ENCODE measurements at regions of chr17 and their contacts with region 1.

Region 1: GRCh38 chr17:47949136-47949759 is 7.9 kb downstream of the PNPO start:
- DNase-seq: peak; percentile 85 to 86
- H3K4me3 ChIP-seq: peak overlapping the region; percentile 42; the same call in 1 of the 2 replicates
- H3K27ac ChIP-seq: peak overlapping the region; percentile 74
- H3K4me1 ChIP-seq: peaks cover 32% of the 10 kb centered on the region
- H3K27me3 ChIP-seq: no peaks in the 10 kb centered on the region
- CTCF ChIP-seq: peak; percentile 99

Region 2: GRCh38 chr17:47821424-47822391 is 127.5 kb before region 1 on chr17 and contains the start of gene OSBPL7:
- CTCF ChIA-PET with region 1: no interaction called
- POLR2A ChIA-PET with region 1: no interaction called
- intact Hi-C with region 1: no loop called
- DNase-seq: peak; percentile 81 to 90
- H3K4me3 ChIP-seq: peak within 1 kb of the TSS; percentile 90
- H3K27ac ChIP-seq: peak within 1 kb of the TSS; percentile 79
- H3K4me1 ChIP-seq: peaks cover 30% of the 10 kb centered on the region
- H3K27me3 ChIP-seq: no peaks in the 10 kb centered on the region
- CTCF ChIP-seq: no peak; the same call in 1 of the 2 replicates
- total RNA-seq, gene OSBPL7: 32.2 and 35.9 TPM in 2 replicates

Region 3: DNA sequence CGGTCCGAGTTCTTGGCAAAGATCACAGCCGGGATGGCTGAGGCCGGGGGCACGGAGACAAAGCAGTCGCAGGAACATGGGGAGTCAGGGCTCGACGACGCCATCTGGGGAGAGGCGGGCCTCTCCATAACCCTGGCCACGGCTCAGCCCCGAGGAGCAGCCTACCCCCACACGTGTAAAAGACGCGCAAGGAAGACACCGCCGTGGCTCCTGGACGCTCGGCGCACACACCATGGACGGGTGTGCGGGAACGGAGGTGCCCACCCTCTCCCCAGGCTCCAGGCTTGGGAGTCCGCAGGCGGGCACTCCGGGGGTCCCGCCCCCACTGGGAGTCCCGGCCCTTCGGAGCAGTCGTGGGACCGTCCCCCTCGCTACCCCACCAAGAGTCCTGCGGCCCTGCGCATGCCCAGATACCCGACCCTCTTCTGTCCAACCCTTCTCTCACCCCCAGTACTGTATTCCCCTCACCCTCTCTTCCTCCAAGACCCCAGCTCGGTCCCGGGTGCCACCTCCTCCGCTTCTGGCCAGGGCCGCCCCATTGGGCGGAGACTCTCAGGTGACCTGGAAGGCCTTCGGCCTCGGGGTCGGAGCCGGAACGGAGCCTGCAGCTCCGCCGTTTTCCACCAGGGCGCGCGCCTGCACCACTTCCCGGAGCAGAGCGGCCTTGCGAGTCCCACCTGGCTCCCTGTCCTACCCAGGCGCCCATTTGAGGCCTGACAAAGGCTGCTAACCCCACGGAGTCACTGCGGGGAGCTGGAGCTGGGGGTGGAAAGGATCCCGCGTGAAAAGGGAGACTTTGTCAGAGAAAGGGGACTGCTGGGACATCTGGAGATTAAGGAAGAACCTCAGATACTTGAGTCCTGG is 108.3 kb before region 1 on chr17 and contains the start of gene SCRN2:
- CTCF ChIA-PET with region 1: interaction called, 11 read pairs
- POLR2A ChIA-PET with region 1: no interaction called
- intact Hi-C with region 1: loop called (anchors 1 kb)
- DNase-seq: peak; percentile 81 to 95
- H3K4me3 ChIP-seq: peak within 1 kb of the TSS; percentile 85
- H3K27ac ChIP-seq: peak within 1 kb of the TSS; percentile 23
- H3K4me1 ChIP-seq: peaks cover 60% of the 10 kb centered on the region
- H3K27me3 ChIP-seq: no peaks in the 10 kb centered on the region
- CTCF ChIP-seq: peak; percentile 100
- total RNA-seq, gene SCRN2: 31.7 and 43.9 TPM in 2 replicates

Region 4: GRCh38 chr17:47889734-47890529 is 59.3 kb before region 1 on chr17:
- CTCF ChIA-PET with region 1: interaction called, 19 read pairs
- POLR2A ChIA-PET with region 1: interaction called, 13 read pairs
- intact Hi-C with region 1: no loop called
- DNase-seq: peak; percentile 71 to 74
- H3K4me3 ChIP-seq: no peak overlapping the region
- H3K27ac ChIP-seq: no peak overlapping the region
- H3K4me1 ChIP-seq: peaks cover 63% of the 10 kb centered on the region
- H3K27me3 ChIP-seq: no peaks in the 10 kb centered on the region
- CTCF ChIP-seq: peak; percentile 95

Region 5: GRCh38 chr17:47895856-47896671 is 53.2 kb before region 1 on chr17 and contains the start of gene SP2:
- CTCF ChIA-PET with region 1: interaction called, 6 read pairs
- POLR2A ChIA-PET with region 1: interaction called, 13 read pairs
- intact Hi-C with region 1: loop called (anchors 1 kb)
- DNase-seq: peak; percentile 99 to 100
- H3K4me3 ChIP-seq: peak within 1 kb of the TSS; percentile 93
- H3K27ac ChIP-seq: peak within 1 kb of the TSS; percentile 74
- H3K4me1 ChIP-seq: peaks cover 32% of the 10 kb centered on the region
- H3K27me3 ChIP-seq: no peaks in the 10 kb centered on the region
- CTCF ChIP-seq: peak; percentile 27; the same call in 1 of the 2 replicates
- total RNA-seq, gene SP2: 13.5 and 18.0 TPM in 2 replicates

Region 6: DNA sequence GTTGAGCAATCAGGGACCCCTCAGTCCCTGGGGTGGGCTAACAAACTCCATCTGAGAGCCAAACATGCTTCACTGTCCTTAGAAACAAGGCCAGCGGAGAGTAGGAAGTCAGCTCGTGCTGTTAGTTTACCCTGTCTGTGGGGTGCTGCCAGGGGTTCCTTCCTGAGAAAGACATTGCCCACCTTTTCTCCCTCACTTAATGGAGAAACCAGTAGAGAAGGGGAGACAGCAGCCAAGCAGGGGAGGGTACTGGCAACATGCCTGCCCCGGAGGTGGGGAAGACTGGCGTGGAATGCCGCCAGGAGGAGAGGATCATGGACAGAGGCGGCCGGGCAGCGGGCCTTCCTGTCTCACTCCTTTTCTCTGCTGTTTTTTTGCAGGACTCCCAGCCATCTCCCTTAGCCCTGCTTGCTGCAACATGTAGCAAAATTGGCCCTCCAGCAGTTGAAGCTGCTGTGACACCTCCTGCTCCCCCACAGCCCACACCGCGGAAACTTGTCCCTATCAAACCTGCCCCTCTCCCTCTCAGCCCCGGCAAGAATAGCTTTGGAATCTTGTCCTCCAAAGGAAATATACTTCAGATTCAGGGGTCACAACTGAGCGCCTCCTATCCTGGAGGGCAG is 33.4 kb before region 1 on chr17:
- CTCF ChIA-PET with region 1: interaction called, 9 read pairs
- POLR2A ChIA-PET with region 1: interaction called, 12 read pairs
- intact Hi-C with region 1: no loop called
- DNase-seq: no peak
- H3K4me3 ChIP-seq: no peak overlapping the region
- H3K27ac ChIP-seq: no peak overlapping the region
- H3K4me1 ChIP-seq: no peaks in the 10 kb centered on the region
- H3K27me3 ChIP-seq: no peaks in the 10 kb centered on the region
- CTCF ChIP-seq: no peak

Region 7: DNA sequence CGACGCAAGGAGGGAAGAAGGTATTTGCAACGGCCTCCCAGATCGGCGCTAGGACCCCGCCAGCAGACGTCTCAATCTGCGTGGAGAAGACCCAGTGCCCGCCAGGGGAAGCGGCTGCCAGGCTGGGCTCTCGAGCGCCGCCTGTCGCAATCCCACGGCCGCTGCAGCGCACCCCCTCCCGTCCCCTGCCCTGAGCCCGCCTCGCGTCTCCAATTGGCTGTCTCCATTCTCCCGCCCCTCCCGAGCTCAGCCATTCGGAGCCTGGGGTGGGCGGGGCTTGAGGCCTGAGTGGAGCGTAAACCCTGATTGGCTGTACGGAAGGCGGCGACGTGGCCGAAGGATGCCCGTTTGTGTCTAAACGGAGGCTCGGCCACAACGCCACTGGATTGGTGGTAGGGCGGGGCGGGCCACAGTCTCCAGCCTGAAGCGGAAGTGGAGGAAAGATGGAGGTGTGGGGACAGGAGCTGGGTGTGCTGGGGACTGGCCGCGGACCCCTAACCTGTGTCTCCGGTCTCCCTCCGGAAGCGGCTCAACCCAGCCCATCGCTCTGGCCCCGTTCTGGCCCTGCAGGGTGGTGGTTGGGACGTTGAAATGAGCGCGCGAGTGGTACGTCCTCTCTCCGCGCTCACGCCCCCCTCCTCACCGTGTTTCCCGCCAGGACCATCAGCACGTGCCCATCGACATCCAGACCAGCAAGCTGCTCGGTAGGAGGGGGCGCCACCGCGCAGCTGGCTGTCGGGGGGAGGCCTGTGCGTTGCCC is 21.6 kb after region 1 on chr17 and contains the start of gene CDK5RAP3:
- CTCF ChIA-PET with region 1: interaction called, 13 read pairs
- POLR2A ChIA-PET with region 1: interaction called, 3 read pairs
- intact Hi-C with region 1: loop called (anchors 1 kb)
- DNase-seq: peak; percentile 97 to 99
- H3K4me3 ChIP-seq: peak within 1 kb of the TSS; percentile 78
- H3K27ac ChIP-seq: peak within 1 kb of the TSS; percentile 60
- H3K4me1 ChIP-seq: peaks cover 52% of the 10 kb centered on the region
- H3K27me3 ChIP-seq: no peaks in the 10 kb centered on the region
- CTCF ChIP-seq: peak; percentile 90
- total RNA-seq, gene CDK5RAP3: 147 and 195 TPM in 2 replicates

Region 8: GRCh38 chr17:48002266-48002915 is 53.1 kb after region 1 on chr17:
- CTCF ChIA-PET with region 1: no interaction called
- POLR2A ChIA-PET with region 1: no interaction called
- intact Hi-C with region 1: no loop called
- DNase-seq: peak; percentile 15 to 89
- H3K4me3 ChIP-seq: no peak overlapping the region
- H3K27ac ChIP-seq: peak overlapping the region; percentile 90
- H3K4me1 ChIP-seq: peaks cover 34% of the 10 kb centered on the region
- H3K27me3 ChIP-seq: no peaks in the 10 kb centered on the region
- CTCF ChIP-seq: no peak

Region 9: GRCh38 chr17:48194097-48194550 is 244.9 kb after region 1 on chr17:
- CTCF ChIA-PET with region 1: no interaction called
- POLR2A ChIA-PET with region 1: no interaction called
- intact Hi-C with region 1: no loop called
- DNase-seq: no peak
- H3K4me3 ChIP-seq: no peak overlapping the region
- H3K27ac ChIP-seq: no peak overlapping the region
- H3K4me1 ChIP-seq: peaks cover 7% of the 10 kb centered on the region; the same call in 1 of the 2 replicates
- H3K27me3 ChIP-seq: no peaks in the 10 kb centered on the region
- CTCF ChIP-seq: no peak

Region 10: DNA sequence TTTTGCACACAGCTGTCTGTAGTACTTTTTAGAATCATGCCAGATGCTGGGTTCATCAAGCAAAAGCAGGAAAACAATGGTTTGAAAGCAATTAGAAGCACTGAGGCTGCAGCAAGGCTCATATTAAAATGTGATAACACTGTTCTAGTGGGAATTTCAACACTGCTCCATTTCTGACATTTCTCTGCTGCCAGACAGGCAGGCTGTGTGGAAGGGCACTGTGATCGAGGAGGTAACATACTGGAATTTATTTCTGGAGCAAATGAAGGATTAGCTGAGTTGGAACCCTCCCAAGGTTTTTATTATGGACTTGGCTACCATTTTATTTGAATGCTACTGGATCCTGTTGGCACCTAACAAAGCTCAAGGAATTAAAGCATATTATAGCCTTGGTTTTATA is 413.9 kb after region 1 on chr17:
- CTCF ChIA-PET with region 1: interaction called, 12 read pairs
- POLR2A ChIA-PET with region 1: no interaction called
- intact Hi-C with region 1: no loop called
- DNase-seq: no peak
- H3K4me3 ChIP-seq: no peak overlapping the region
- H3K27ac ChIP-seq: no peak overlapping the region
- H3K4me1 ChIP-seq: no peaks in the 10 kb centered on the region
- H3K27me3 ChIP-seq: no peaks in the 10 kb centered on the region
- CTCF ChIP-seq: no peak

Measured in PC-9 (cell line).